ENCODE measurements at regions of chr18 and their contacts with region 1.

Region 1: GRCh38 chr18:54149078-54149697 is 75.3 kb downstream of the MBD2 start:
- DNase-seq: peak; percentile 87
- H3K4me3 Mint-ChIP-seq: peak overlapping the region; percentile 49
- H3K27ac Mint-ChIP-seq: peak overlapping the region; percentile 97
- H3K4me1 Mint-ChIP-seq: peaks cover 47% of the 10 kb centered on the region
- H3K27me3 Mint-ChIP-seq: no peaks in the 10 kb centered on the region

Region 2: GRCh38 chr18:54052732-54053429 is 96.3 kb before region 1 on chr18:
- CTCF ChIA-PET with region 1: no interaction called
- POLR2A ChIA-PET with region 1: no interaction called
- intact Hi-C with region 1: no loop called
- DNase-seq: no peak
- H3K4me3 Mint-ChIP-seq: no peak overlapping the region
- H3K27ac Mint-ChIP-seq: no peak overlapping the region
- H3K4me1 Mint-ChIP-seq: no peaks in the 10 kb centered on the region
- H3K27me3 Mint-ChIP-seq: no peaks in the 10 kb centered on the region

Region 3: DNA sequence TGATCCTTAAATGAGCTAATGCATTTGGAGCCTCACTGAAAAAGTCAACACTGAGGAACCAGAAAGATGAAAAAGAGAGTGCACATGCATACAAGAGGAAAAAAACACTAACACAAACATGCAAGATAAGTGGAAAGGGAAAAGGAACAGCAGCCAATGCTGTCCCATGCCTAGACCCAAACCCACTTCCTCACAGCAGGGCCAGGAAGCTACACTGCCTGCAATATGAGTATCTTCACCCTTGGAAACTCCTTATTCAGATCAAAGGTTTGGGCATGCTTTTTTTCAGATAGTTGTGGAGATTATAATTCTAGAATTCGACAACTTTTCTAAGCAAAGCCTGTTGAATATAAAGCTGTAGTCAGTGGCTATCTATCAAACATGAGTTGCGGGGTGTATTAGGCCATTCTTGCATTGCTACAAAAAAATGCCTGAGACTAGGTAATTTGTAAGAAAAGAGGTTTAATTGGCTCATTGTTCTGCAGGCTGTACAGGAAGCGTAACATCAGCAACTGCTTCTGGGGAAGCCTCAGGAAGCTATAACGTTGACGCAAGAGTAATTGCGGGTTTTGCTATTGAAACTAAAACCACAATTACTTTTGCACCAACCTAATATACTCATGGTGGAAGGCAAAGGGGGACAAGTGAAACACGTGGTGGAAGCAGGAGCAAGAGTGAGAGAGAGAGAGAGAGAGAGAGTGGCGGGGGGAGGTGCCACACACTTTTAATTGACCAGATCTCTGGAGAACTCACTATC is 63.0 kb before region 1 on chr18:
- CTCF ChIA-PET with region 1: no interaction called
- POLR2A ChIA-PET with region 1: no interaction called
- intact Hi-C with region 1: loop called (anchors 1 kb)
- DNase-seq: peak; percentile 41
- H3K4me3 Mint-ChIP-seq: no peak overlapping the region
- H3K27ac Mint-ChIP-seq: peak overlapping the region; percentile 55
- H3K4me1 Mint-ChIP-seq: peaks cover 17% of the 10 kb centered on the region
- H3K27me3 Mint-ChIP-seq: no peaks in the 10 kb centered on the region

Region 4: DNA sequence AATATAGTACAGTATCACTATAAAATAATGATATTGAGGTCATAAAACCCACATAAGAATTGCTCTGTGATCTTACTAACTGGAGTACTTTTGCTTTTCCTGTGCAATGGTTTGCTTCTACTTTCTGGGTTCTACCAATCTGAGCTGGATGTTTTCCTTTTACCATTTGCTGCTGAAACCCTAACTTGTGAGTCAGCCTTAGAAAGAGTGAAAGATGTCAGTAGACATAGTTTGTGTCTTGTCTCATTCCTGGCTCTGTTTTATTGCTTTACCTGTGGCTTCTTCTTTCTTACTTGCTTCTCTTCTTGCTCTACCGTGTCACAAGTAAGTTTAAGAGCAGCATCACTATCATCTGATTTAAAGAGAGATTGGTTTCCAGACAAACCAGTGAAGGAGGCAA is 14.3 kb after region 1 on chr18:
- CTCF ChIA-PET with region 1: interaction called, 5 read pairs
- POLR2A ChIA-PET with region 1: interaction called, 4 read pairs
- intact Hi-C with region 1: loop called (anchors 1 kb)
- DNase-seq: no peak
- H3K4me3 Mint-ChIP-seq: no peak overlapping the region
- H3K27ac Mint-ChIP-seq: peak overlapping the region; percentile 85
- H3K4me1 Mint-ChIP-seq: peaks cover 22% of the 10 kb centered on the region
- H3K27me3 Mint-ChIP-seq: no peaks in the 10 kb centered on the region

Region 5: GRCh38 chr18:54209471-54210180 is 60.4 kb after region 1 on chr18:
- CTCF ChIA-PET with region 1: no interaction called
- POLR2A ChIA-PET with region 1: interaction called, 7 read pairs
- intact Hi-C with region 1: loop called (anchors 1 kb)
- DNase-seq: no peak
- H3K4me3 Mint-ChIP-seq: peak overlapping the region; percentile 17
- H3K27ac Mint-ChIP-seq: peak overlapping the region; percentile 83
- H3K4me1 Mint-ChIP-seq: peaks cover 62% of the 10 kb centered on the region
- H3K27me3 Mint-ChIP-seq: no peaks in the 10 kb centered on the region

Region 6: DNA sequence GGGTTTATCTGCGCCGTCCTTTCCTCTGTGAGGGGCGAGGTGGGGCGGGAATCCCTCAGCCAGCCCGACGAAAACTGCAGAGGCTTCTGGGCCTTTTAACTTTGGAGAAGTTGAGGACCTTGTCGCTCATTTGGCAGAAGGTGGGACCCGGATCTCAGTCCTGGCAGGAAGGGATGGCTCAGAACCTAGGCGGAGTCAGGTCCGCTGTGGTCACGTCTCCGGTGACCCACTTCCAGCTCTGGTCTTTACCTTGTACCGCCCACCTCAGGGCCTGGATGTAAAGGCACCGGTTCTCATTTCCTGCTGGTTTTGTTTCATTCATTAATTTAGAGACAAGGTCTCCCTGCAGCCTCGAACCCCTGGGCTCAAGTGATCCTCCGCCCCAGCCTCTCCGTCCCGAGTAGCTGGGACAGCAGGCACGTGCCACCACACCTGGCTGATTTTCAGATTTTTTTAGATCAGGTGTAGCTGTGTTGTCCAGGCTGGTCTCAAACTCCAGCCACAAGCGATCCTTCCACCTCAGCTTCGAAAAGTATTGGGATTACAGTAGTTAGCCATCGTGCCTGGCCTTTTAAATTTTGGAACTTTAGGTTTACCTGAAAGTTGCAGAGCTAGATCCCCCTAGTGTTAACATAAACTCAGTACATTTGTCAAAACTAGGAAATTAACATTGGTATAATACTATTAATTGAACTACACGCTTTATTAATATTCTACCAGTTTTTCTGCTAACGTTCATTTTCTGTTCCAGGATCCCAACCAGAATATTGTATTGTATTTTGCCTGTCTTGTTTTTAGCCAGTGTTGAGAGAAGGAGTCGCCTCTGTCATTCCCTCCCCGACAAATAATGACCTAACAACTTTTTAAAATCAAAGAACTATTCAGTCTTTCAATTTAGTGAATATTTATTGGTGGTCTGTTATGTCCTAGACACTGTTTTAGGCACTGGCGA is 121.0 kb after region 1 on chr18:
- CTCF ChIA-PET with region 1: interaction called, 3 read pairs
- POLR2A ChIA-PET with region 1: no interaction called
- intact Hi-C with region 1: loop called (anchors 1 kb)
- DNase-seq: peak; percentile 78
- H3K4me3 Mint-ChIP-seq: peak overlapping the region; percentile 78
- H3K27ac Mint-ChIP-seq: peak overlapping the region; percentile 94
- H3K4me1 Mint-ChIP-seq: peaks cover 29% of the 10 kb centered on the region
- H3K27me3 Mint-ChIP-seq: no peaks in the 10 kb centered on the region

Region 7: GRCh38 chr18:54717673-54718407 is 568.7 kb after region 1 on chr18:
- CTCF ChIA-PET with region 1: no interaction called
- POLR2A ChIA-PET with region 1: no interaction called
- intact Hi-C with region 1: loop called (anchors 5 kb)
- DNase-seq: peak; percentile 62
- H3K4me3 Mint-ChIP-seq: peak overlapping the region; percentile 61
- H3K27ac Mint-ChIP-seq: peak overlapping the region; percentile 23
- H3K4me1 Mint-ChIP-seq: peaks cover 32% of the 10 kb centered on the region
- H3K27me3 Mint-ChIP-seq: peaks cover 5% of the 10 kb centered on the region

Measured in activated CD4-positive, alpha-beta memory T cell treated with anti-CD3 and anti-CD28 coated beads for 36 hours (primary cell).